ENCODE measurements at regions of chr4 and their contacts with region 1.

Region 1: GRCh38 chr4:13548984-13549546 is 4.8 kb upstream of the NKX3-2 start:
- DNase-seq: peak; percentile 66 to 71 (median 69)
- H3K4me3 ChIP-seq: no peak overlapping the region
- H3K4me3 Mint-ChIP-seq: peak overlapping the region in 7 of 8 donors; percentile 32 to 78 (median 56)
- H3K27ac ChIP-seq: no peak overlapping the region
- H3K27ac Mint-ChIP-seq: peak overlapping the region in 2 of 7 donors; percentile 59 to 77
- H3K4me1 ChIP-seq: peaks cover 39% of the 10 kb centered on the region
- H3K4me1 Mint-ChIP-seq: peaks cover 20 to 31% (median 26%) of the 10 kb centered on the region in 4 donors
- H3K27me3 ChIP-seq: peaks cover 43% of the 10 kb centered on the region
- H3K27me3 Mint-ChIP-seq: peaks cover 56 to 58% of the 10 kb centered on the region in 2 donors

Region 2: DNA sequence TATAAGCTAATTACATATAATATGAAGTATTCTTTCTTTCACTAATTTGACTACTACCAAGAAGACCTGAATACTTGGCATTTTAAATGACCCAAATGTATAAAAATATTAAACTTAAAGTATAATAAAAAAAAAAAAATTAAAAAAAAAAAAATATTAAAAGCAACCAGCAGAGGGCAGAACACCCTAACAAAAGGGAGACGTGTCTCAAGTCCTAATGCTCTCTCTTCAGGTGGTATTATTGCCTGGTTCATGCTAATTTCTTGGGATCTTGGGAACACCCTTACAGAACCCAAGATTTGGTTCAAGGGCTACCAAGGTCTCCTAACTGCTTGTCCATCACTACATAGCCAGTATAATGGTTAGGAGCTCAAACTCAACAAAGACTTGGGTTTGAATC is 819.7 kb before region 1 on chr4:
- CTCF ChIA-PET with region 1: interaction called, 13 read pairs
- POLR2A ChIA-PET with region 1: no interaction called
- intact Hi-C with region 1: no loop called
- DNase-seq: peak in 3 of 5 donors; percentile 2 to 10 (median 3)
- H3K4me3 ChIP-seq: no peak overlapping the region
- H3K4me3 Mint-ChIP-seq: no peak overlapping the region
- H3K27ac ChIP-seq: no peak overlapping the region
- H3K27ac Mint-ChIP-seq: no peak overlapping the region
- H3K4me1 ChIP-seq: no peaks in the 10 kb centered on the region
- H3K4me1 Mint-ChIP-seq: peaks cover 0 to 1% (median 0%) of the 10 kb centered on the region in 4 donors
- H3K27me3 ChIP-seq: no peaks in the 10 kb centered on the region
- H3K27me3 Mint-ChIP-seq: peaks cover 12 to 16% of the 10 kb centered on the region in 2 donors

Region 3: GRCh38 chr4:12844141-12844540 is 704.9 kb before region 1 on chr4:
- CTCF ChIA-PET with region 1: no interaction called
- POLR2A ChIA-PET with region 1: no interaction called
- intact Hi-C with region 1: loop called (anchors 2 kb)
- DNase-seq: no peak
- H3K4me3 ChIP-seq: no peak overlapping the region
- H3K4me3 Mint-ChIP-seq: no peak overlapping the region
- H3K27ac ChIP-seq: no peak overlapping the region
- H3K27ac Mint-ChIP-seq: no peak overlapping the region
- H3K4me1 ChIP-seq: no peaks in the 10 kb centered on the region
- H3K4me1 Mint-ChIP-seq: no peaks in the 10 kb centered on the region
- H3K27me3 ChIP-seq: no peaks in the 10 kb centered on the region
- H3K27me3 Mint-ChIP-seq: peaks cover 1 to 4% of the 10 kb centered on the region in 2 donors

Region 4: GRCh38 chr4:13484122-13484748 is 64.8 kb before region 1 on chr4 and contains the start of gene RAB28:
- CTCF ChIA-PET with region 1: no interaction called
- POLR2A ChIA-PET with region 1: no interaction called
- intact Hi-C with region 1: loop called (anchors 2 kb)
- DNase-seq: peak; percentile 95 to 97 (median 96)
- H3K4me3 ChIP-seq: peak within 1 kb of the TSS; percentile 77 to 81
- H3K4me3 Mint-ChIP-seq: peak within 1 kb of the TSS; percentile 73 to 96 (median 90)
- H3K27ac ChIP-seq: peak within 1 kb of the TSS; percentile 93
- H3K27ac Mint-ChIP-seq: peak within 1 kb of the TSS; percentile 85 to 99 (median 99)
- H3K4me1 ChIP-seq: peaks cover 19% of the 10 kb centered on the region
- H3K4me1 Mint-ChIP-seq: peaks cover 14 to 27% (median 22%) of the 10 kb centered on the region in 4 donors
- H3K27me3 ChIP-seq: no peaks in the 10 kb centered on the region
- H3K27me3 Mint-ChIP-seq: peaks cover 12 to 14% of the 10 kb centered on the region in 2 donors
- total RNA-seq, gene RAB28: 13.3 to 14.0 TPM

Measured in CD4-positive, alpha-beta memory T cell (primary cell).